ENCODE measurements at regions of chr11 and their contacts with region 1.

Region 1: DNA sequence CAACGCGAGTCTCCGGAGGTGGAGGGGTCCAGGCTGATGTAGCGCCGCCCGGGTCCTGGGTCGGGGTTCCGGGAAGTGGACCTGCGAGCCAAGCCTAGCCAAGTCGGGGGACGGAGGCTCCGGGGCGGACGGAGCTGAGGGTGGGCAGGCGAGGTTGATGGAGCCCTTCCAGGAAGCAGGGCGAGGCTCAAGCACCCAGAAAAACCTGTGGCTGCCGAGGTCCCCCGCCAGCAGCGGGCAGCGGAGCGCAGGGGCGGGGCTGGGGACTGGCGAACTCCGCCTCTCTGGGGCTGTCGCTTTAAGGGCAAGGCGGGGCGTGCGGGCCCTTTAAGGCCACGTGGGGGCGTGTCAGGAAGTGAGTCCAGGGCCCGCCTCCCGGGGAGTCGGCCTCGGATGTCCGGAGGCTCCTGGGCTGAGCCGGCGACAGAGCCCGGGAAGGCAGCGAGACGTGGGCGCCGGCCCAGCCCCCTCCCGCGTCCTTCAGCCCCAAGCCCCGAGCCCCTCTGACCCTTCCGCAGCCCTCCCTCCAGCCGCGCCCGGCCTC is at the start of gene SLC35C1:
- DNase-seq: peak; percentile 98
- H3K4me3 ChIP-seq: peak within 1 kb of the TSS; percentile 78 to 90 (median 86)
- H3K27ac ChIP-seq: peak within 1 kb of the TSS; percentile 86 to 94 (median 93)
- H3K4me1 ChIP-seq: peaks cover 28 to 50% (median 44%) of the 10 kb centered on the region in 4 donors
- H3K27me3 ChIP-seq: no peaks in the 10 kb centered on the region
- CTCF ChIP-seq: peak in 1 of 3 experiments; percentile 28
- EP300 ChIP-seq: no peak
- POLR2A ChIP-seq: peak; percentile 61
- total RNA-seq, gene SLC35C1: 9.6 to 18.0 (median 13.1) TPM

Region 2: GRCh38 chr11:45843118-45843924 is 38.5 kb after region 1 on chr11:
- intact Hi-C with region 1: loop called (anchors 5 kb)
- DNase-seq: peak; percentile 98
- H3K4me3 ChIP-seq: peak overlapping the region; percentile 21 to 41 (median 28)
- H3K27ac ChIP-seq: peak overlapping the region; percentile 69 to 77 (median 75)
- H3K4me1 ChIP-seq: peaks cover 16 to 28% (median 20%) of the 10 kb centered on the region in 4 donors
- H3K27me3 ChIP-seq: no peaks in the 10 kb centered on the region
- CTCF ChIP-seq: peak; percentile 92 to 97 (median 94)
- EP300 ChIP-seq: no peak
- POLR2A ChIP-seq: no peak

Region 3: GRCh38 chr11:46050003-46050461 is 245.2 kb after region 1 on chr11:
- intact Hi-C with region 1: no loop called
- DNase-seq: no peak
- H3K4me3 ChIP-seq: no peak overlapping the region
- H3K27ac ChIP-seq: peak overlapping the region in 3 of 4 donors; percentile 16 to 52 (median 26)
- H3K4me1 ChIP-seq: peaks cover 22 to 42% (median 36%) of the 10 kb centered on the region in 4 donors
- H3K27me3 ChIP-seq: no peaks in the 10 kb centered on the region
- CTCF ChIP-seq: no peak
- EP300 ChIP-seq: no peak
- POLR2A ChIP-seq: no peak

Region 4: GRCh38 chr11:46272816-46273427 is 468.1 kb after region 1 on chr11:
- intact Hi-C with region 1: no loop called
- DNase-seq: no peak
- H3K4me3 ChIP-seq: no peak overlapping the region
- H3K27ac ChIP-seq: peak overlapping the region; percentile 46 to 74 (median 62)
- H3K4me1 ChIP-seq: peaks cover 34 to 55% (median 50%) of the 10 kb centered on the region in 4 donors
- H3K27me3 ChIP-seq: peaks cover 0 to 30% (median 13%) of the 10 kb centered on the region in 4 donors
- CTCF ChIP-seq: no peak
- EP300 ChIP-seq: no peak
- POLR2A ChIP-seq: no peak